GM12878 (cell line): ENCODE measurements at regions of chr9 and their contacts with region 1.

Region 1: DNA sequence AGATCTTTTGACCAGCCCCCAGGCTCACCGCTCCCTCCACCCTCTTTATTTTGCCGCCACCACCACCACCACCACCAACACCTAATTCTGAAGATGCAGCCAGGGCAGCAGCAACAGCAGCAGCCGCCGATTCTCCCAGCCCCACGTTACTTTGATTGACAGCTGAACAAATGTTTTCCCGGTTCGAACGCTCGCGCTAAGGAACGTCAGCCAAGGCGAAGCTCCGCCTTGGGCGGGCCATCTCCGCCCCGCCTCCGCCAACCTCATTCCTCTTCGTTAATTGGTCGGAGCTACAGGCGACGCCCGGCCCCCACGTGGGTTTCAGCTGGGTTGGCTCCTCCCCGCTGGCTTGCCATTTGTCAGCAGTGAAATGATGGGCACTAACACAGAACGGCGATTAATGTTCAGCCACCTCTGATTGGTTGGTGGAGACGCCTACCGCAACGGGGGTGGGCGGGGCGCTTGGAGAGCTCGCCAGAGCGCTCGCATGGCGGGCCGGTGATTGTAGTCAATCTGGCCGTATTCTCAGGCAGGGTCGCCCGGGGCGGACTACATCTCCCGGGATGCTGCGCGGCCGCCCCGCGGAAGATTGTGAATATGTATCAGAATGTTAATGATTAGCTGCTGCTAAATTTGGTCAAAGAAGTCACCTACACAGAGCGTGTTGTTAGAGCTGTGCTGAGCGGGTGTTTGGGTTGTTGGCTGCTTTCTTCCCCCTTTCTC is at the start of gene TLE4:
- DNase-seq: peak; percentile 100
- ATAC-seq: peak; percentile 84
- H3K4me3 ChIP-seq: peak within 1 kb of the TSS; percentile 89
- H3K27ac ChIP-seq: peak within 1 kb of the TSS; percentile 82
- H3K4me1 ChIP-seq: peaks cover 17% of the 10 kb centered on the region
- H3K27me3 ChIP-seq: no peaks in the 10 kb centered on the region
- CTCF ChIP-seq: no peak
- EP300 ChIP-seq: no peak
- POLR2A ChIP-seq: peak; percentile 81
- RAD21 ChIP-seq: no peak
- polyA plus RNA-seq, gene TLE4: 5.3 to 6.6 TPM

Region 2: DNA sequence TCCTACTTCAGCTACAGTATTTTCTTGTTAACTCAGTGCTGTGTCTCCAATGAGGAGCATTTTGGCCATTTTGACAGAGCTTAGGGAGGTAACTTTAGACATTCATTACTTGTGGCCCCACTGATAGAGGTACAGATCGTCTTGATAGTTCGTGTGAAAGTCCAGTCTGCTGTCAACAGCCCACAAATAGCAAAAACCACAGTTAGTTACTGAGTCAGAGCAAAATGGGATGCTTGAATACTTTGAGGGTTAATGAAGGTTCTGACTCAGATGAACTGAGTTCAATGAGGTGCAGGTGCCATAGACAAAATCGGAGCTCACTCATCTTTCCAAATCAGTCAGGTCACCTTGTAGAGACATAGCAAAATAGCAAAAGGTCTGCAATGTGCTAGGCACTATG is 162.9 kb before region 1 on chr9:
- CTCF ChIA-PET with region 1: no interaction called
- POLR2A ChIA-PET with region 1: no interaction called
- RAD21 ChIA-PET with region 1: no interaction called
- SMC1A ChIA-PET with region 1: no interaction called
- in situ Hi-C with region 1: no loop called
- intact Hi-C with region 1: loop called (anchors 5 kb)
- DNase-seq: no peak
- ATAC-seq: peak; percentile 66
- H3K4me3 ChIP-seq: no peak overlapping the region
- H3K27ac ChIP-seq: no peak overlapping the region
- H3K4me1 ChIP-seq: no peaks in the 10 kb centered on the region
- H3K27me3 ChIP-seq: no peaks in the 10 kb centered on the region; a peak in 1 of 4 replicates
- CTCF ChIP-seq: no peak
- EP300 ChIP-seq: no peak
- POLR2A ChIP-seq: no peak
- RAD21 ChIP-seq: no peak

Region 3: GRCh38 chr9:79583952-79584654 is 12.6 kb after region 1 on chr9:
- CTCF ChIA-PET with region 1: interaction called, 5 read pairs
- POLR2A ChIA-PET with region 1: interaction called, 11 read pairs
- RAD21 ChIA-PET with region 1: interaction called, 12 read pairs
- SMC1A ChIA-PET with region 1: interaction called, 9 read pairs
- in situ Hi-C with region 1: no loop called
- intact Hi-C with region 1: no loop called
- DNase-seq: no peak
- ATAC-seq: peak; percentile 50
- H3K4me3 ChIP-seq: no peak overlapping the region
- H3K27ac ChIP-seq: no peak overlapping the region
- H3K4me1 ChIP-seq: no peaks in the 10 kb centered on the region
- H3K27me3 ChIP-seq: no peaks in the 10 kb centered on the region
- CTCF ChIP-seq: no peak
- EP300 ChIP-seq: no peak
- POLR2A ChIP-seq: no peak
- RAD21 ChIP-seq: no peak

Region 4: GRCh38 chr9:79623799-79624721 is 52.6 kb after region 1 on chr9:
- CTCF ChIA-PET with region 1: interaction called, 7 read pairs
- POLR2A ChIA-PET with region 1: interaction called, 29 read pairs
- RAD21 ChIA-PET with region 1: interaction called, 32 read pairs
- SMC1A ChIA-PET with region 1: interaction called, 21 read pairs
- in situ Hi-C with region 1: no loop called
- intact Hi-C with region 1: loop called (anchors 1 kb)
- DNase-seq: peak; percentile 79
- ATAC-seq: peak; percentile 97
- H3K4me3 ChIP-seq: peak overlapping the region; percentile 48; the same call in 1 of the 2 replicates
- H3K27ac ChIP-seq: peak overlapping the region; percentile 67
- H3K4me1 ChIP-seq: peaks cover 10% of the 10 kb centered on the region
- H3K27me3 ChIP-seq: no peaks in the 10 kb centered on the region
- CTCF ChIP-seq: no peak
- EP300 ChIP-seq: peak in 1 of 2 experiments; percentile 63; a peak in 2 of 4 replicates
- POLR2A ChIP-seq: no peak
- RAD21 ChIP-seq: peak; percentile 2; the same call in 1 of the 2 replicates

Region 5: GRCh38 chr9:79673614-79674013 is 102.1 kb after region 1 on chr9:
- CTCF ChIA-PET with region 1: interaction called, 3 read pairs
- POLR2A ChIA-PET with region 1: interaction called, 4 read pairs
- RAD21 ChIA-PET with region 1: interaction called, 3 read pairs
- SMC1A ChIA-PET with region 1: interaction called, 5 read pairs
- in situ Hi-C with region 1: no loop called
- intact Hi-C with region 1: loop called (anchors 5 kb)
- DNase-seq: peak; percentile 31
- ATAC-seq: peak; percentile 89
- H3K4me3 ChIP-seq: no peak overlapping the region
- H3K27ac ChIP-seq: no peak overlapping the region
- H3K4me1 ChIP-seq: peaks cover 11% of the 10 kb centered on the region
- H3K27me3 ChIP-seq: no peaks in the 10 kb centered on the region
- CTCF ChIP-seq: no peak
- EP300 ChIP-seq: peak; percentile 40 to 41; a peak in 1 of 4 replicates
- POLR2A ChIP-seq: no peak
- RAD21 ChIP-seq: no peak

Region 6: DNA sequence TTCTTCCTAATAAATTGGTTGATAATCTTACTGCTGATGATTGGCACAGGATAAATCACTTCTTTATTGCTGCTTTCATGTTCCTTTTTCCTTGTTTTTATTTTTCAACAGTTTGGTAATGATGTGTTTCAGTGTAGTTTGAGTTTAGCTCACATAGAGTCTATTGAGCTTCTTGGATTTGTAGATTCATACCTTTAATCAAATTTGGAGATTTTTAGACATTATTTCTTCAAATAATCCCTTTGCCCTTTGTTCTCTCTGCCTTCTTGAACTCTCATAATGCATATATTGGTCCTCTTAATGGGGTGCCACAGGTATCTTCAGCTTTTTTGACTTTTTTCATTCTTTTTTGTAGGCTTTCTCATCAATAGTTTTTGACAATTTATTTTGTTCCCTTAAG is 275.6 kb after region 1 on chr9:
- CTCF ChIA-PET with region 1: no interaction called
- POLR2A ChIA-PET with region 1: no interaction called
- RAD21 ChIA-PET with region 1: no interaction called
- SMC1A ChIA-PET with region 1: no interaction called
- in situ Hi-C with region 1: no loop called
- intact Hi-C with region 1: no loop called
- DNase-seq: no peak
- ATAC-seq: no peak
- H3K4me3 ChIP-seq: no peak overlapping the region
- H3K27ac ChIP-seq: no peak overlapping the region
- H3K4me1 ChIP-seq: no peaks in the 10 kb centered on the region
- H3K27me3 ChIP-seq: no peaks in the 10 kb centered on the region
- CTCF ChIP-seq: no peak
- EP300 ChIP-seq: no peak
- POLR2A ChIP-seq: no peak
- RAD21 ChIP-seq: no peak